Caco-2 (cell line): ENCODE measurements at regions of chr6 and their contacts with region 1.

Region 1: DNA sequence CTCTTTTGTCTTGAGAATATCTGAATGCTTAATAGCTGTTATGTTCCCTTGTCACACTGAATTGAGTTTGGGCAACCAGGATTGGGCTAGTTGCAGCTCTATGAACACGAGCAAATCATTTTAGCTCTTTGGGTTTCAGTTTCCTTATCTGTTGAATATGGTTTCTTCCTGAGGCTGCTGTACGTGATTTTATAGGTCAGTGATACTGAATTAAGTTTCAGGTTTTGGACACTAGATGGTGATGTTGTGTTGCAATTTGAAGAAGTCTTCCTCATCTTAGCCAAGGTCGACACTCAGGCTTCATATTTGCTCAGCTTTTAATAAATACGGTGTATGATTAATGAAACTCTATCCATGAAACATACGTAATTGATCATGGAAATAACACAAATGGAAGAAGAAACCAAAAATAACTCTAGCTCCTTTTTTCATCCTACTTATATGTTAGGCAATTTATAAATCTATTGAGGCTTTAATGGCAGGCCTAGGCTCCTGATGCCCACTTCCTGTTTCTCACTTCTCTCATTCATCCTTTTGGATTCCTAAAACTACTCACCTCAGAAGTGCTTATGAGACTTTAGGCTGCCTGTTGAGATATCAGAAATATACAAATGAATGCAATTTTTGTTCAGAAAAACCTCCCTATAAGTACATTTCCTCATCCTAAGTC is 354.1 kb upstream of the MAP3K7 start:
- DNase-seq: peak in 1 of 2 experiments; percentile 46
- H3K4me3 ChIP-seq: no peak overlapping the region
- H3K4me3 Mint-ChIP-seq: no peak overlapping the region
- H3K27ac Mint-ChIP-seq: no peak overlapping the region
- H3K4me1 ChIP-seq: no peaks in the 10 kb centered on the region
- H3K4me1 Mint-ChIP-seq: no peaks in the 10 kb centered on the region
- H3K27me3 ChIP-seq: no peaks in the 10 kb centered on the region; the same call in 1 of the 2 replicates
- H3K27me3 Mint-ChIP-seq: no peaks in the 10 kb centered on the region
- CTCF ChIP-seq: peak; percentile 45 to 58

Region 2: GRCh38 chr6:90982051-90982450 is 41.1 kb after region 1 on chr6:
- CTCF ChIA-PET with region 1: no interaction called
- POLR2A ChIA-PET with region 1: no interaction called
- intact Hi-C with region 1: loop called (anchors 1 kb)
- DNase-seq: peak in 1 of 2 experiments; percentile 27
- H3K4me3 ChIP-seq: no peak overlapping the region
- H3K4me3 Mint-ChIP-seq: no peak overlapping the region
- H3K27ac Mint-ChIP-seq: no peak overlapping the region
- H3K4me1 ChIP-seq: no peaks in the 10 kb centered on the region
- H3K4me1 Mint-ChIP-seq: no peaks in the 10 kb centered on the region
- H3K27me3 ChIP-seq: no peaks in the 10 kb centered on the region
- H3K27me3 Mint-ChIP-seq: peaks cover 6% of the 10 kb centered on the region
- CTCF ChIP-seq: peak in 1 of 2 experiments; percentile 42

Region 3: DNA sequence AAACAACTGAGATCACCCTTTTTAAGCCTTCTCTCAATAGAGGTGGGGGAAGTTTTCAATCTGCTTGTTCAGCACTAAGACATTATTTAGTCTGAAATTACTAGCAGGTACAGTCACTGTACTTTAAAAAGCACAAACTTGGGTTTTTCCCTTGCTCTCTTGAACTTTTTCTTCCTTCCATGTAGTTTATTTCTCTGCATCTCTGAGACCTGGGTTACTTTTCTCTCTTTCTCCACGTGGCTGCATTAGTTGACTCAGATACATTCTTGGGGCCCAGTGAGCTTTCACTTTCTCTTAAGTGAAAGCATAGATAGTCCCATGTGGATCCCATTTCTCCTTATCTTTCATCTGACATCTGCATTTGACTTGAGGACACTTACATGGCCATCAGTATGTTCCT is 79.8 kb after region 1 on chr6:
- CTCF ChIA-PET with region 1: no interaction called
- POLR2A ChIA-PET with region 1: no interaction called
- intact Hi-C with region 1: no loop called
- DNase-seq: no peak
- H3K4me3 ChIP-seq: no peak overlapping the region
- H3K4me3 Mint-ChIP-seq: no peak overlapping the region
- H3K27ac Mint-ChIP-seq: no peak overlapping the region
- H3K4me1 ChIP-seq: no peaks in the 10 kb centered on the region
- H3K4me1 Mint-ChIP-seq: no peaks in the 10 kb centered on the region
- H3K27me3 ChIP-seq: no peaks in the 10 kb centered on the region
- H3K27me3 Mint-ChIP-seq: peaks cover 2% of the 10 kb centered on the region
- CTCF ChIP-seq: no peak

Region 4: GRCh38 chr6:92647625-92648024 is 1706.7 kb after region 1 on chr6:
- CTCF ChIA-PET with region 1: no interaction called
- POLR2A ChIA-PET with region 1: no interaction called
- intact Hi-C with region 1: loop called (anchors 5 kb)
- DNase-seq: no peak
- H3K4me3 ChIP-seq: no peak overlapping the region
- H3K4me3 Mint-ChIP-seq: no peak overlapping the region
- H3K27ac Mint-ChIP-seq: no peak overlapping the region
- H3K4me1 ChIP-seq: no peaks in the 10 kb centered on the region
- H3K4me1 Mint-ChIP-seq: no peaks in the 10 kb centered on the region
- H3K27me3 ChIP-seq: no peaks in the 10 kb centered on the region
- H3K27me3 Mint-ChIP-seq: no peaks in the 10 kb centered on the region
- CTCF ChIP-seq: no peak

Region 5: DNA sequence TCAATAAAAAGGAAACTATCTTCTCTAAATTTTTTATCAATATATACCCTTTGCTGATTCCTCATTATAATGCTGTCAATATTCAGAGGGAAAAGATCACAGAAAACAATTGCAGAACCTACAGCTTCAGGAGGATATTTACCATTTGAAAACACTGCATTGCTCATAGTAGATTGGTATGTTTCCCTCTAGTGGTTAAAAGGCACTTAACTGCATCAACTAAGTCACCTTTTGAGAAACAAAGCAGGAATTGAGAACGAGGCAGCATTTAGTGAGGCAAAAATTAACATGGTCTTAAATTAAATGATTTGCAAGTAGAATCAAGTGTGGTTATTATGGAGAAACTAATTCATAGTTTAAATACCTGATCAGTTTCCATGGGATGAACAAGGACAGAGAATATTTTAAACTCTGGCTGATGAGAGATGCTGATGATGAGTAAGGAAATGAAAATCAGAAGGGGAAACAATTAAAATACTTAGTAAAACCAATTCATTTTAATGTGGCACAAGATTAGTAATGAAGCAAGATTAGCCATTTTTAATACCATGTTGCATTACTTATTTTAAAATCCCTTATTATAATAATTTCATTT is 1836.3 kb after region 1 on chr6:
- CTCF ChIA-PET with region 1: no interaction called
- POLR2A ChIA-PET with region 1: no interaction called
- intact Hi-C with region 1: loop called (anchors 5 kb)
- DNase-seq: peak in 1 of 2 experiments; percentile 2
- H3K4me3 ChIP-seq: no peak overlapping the region
- H3K4me3 Mint-ChIP-seq: no peak overlapping the region
- H3K27ac Mint-ChIP-seq: no peak overlapping the region
- H3K4me1 ChIP-seq: no peaks in the 10 kb centered on the region
- H3K4me1 Mint-ChIP-seq: no peaks in the 10 kb centered on the region
- H3K27me3 ChIP-seq: no peaks in the 10 kb centered on the region
- H3K27me3 Mint-ChIP-seq: no peaks in the 10 kb centered on the region
- CTCF ChIP-seq: peak in 1 of 2 experiments; percentile 56